ENCODE measurements at regions of chr15 and their contacts with region 1.

Region 1: GRCh38 chr15:32956006-32956405 is 238.2 kb downstream of the GREM1 start:
- DNase-seq: peak; percentile 40
- CTCF ChIP-seq: peak; percentile 36

Region 2: DNA sequence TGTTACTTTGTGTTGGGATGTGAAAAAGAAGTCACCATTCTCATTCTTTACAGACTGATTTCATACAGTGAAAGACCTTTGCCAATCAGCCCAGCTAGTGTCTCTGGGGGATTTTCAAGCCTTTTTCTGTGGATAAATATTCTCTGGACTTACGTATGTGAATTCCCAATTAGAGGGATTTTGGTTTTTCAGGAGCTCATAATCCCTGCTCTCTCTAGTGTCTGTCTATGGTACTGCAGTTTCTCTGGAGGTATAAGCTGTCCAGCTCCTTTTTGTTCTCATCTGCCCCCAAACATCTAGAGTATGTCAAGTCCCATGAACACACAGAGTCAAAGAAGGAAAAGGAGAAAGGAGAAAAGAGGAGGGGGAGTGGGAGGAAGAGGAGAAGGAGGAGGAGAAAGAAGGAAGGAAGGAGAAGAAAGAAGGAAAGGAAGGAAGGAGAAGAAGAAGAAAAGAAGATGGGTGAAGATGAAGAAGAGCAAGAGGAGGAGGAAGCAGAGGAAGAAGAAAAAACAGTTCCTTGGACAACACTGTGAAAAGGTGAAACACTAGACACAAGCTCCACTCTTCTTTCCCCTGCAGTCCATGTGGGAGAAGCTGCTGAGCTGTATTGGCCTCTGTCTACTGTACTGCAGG is 19.6 kb before region 1 on chr15:
- CTCF ChIA-PET with region 1: interaction called, 22 read pairs
- POLR2A ChIA-PET with region 1: no interaction called
- DNase-seq: peak; percentile 22
- CTCF ChIP-seq: peak; percentile 25

Region 3: GRCh38 chr15:32942401-32942841 is 13.6 kb before region 1 on chr15:
- CTCF ChIA-PET with region 1: interaction called, 22 read pairs
- POLR2A ChIA-PET with region 1: no interaction called
- DNase-seq: no peak
- CTCF ChIP-seq: no peak